T-cell (primary cell): ENCODE measurements at regions of chr4 and their contacts with region 1.

Region 1: GRCh38 chr4:108107729-108108382 is 60.9 kb downstream of the LEF1 start:
- DNase-seq: peak in 15 of 35 experiments; percentile 19 to 72 (median 36)
- ATAC-seq: peak; percentile 81 to 85 (median 84)
- H3K4me3 ChIP-seq: peak overlapping the region; percentile 19 to 49
- H3K4me3 Mint-ChIP-seq: peak overlapping the region; percentile 54 to 67 (median 63)
- H3K27ac ChIP-seq: peak overlapping the region; percentile 83
- H3K27ac Mint-ChIP-seq: peak overlapping the region; percentile 93 to 97
- H3K4me1 ChIP-seq: peaks cover 72 to 88% of the 10 kb centered on the region in 2 experiments
- H3K4me1 Mint-ChIP-seq: peaks cover 93 to 96% (median 96%) of the 10 kb centered on the region in 3 donors
- H3K27me3 ChIP-seq: no peaks in the 10 kb centered on the region
- H3K27me3 Mint-ChIP-seq: no peaks in the 10 kb centered on the region

Region 2: GRCh38 chr4:108126806-108127205 is 18.9 kb after region 1 on chr4:
- CTCF ChIA-PET with region 1: interaction called in 1 of 2 experiments, 12 read pairs
- POLR2A ChIA-PET with region 1: interaction called, 5 read pairs
- DNase-seq: no peak
- ATAC-seq: no peak
- H3K4me3 ChIP-seq: no peak overlapping the region
- H3K4me3 Mint-ChIP-seq: peak overlapping the region in 1 of 3 donors; percentile 83
- H3K27ac ChIP-seq: no peak overlapping the region
- H3K27ac Mint-ChIP-seq: peak overlapping the region; percentile 57 to 88
- H3K4me1 ChIP-seq: peaks cover 24 to 63% of the 10 kb centered on the region in 2 experiments
- H3K4me1 Mint-ChIP-seq: peaks cover 84 to 87% (median 84%) of the 10 kb centered on the region in 3 donors
- H3K27me3 ChIP-seq: no peaks in the 10 kb centered on the region
- H3K27me3 Mint-ChIP-seq: no peaks in the 10 kb centered on the region

Region 3: DNA sequence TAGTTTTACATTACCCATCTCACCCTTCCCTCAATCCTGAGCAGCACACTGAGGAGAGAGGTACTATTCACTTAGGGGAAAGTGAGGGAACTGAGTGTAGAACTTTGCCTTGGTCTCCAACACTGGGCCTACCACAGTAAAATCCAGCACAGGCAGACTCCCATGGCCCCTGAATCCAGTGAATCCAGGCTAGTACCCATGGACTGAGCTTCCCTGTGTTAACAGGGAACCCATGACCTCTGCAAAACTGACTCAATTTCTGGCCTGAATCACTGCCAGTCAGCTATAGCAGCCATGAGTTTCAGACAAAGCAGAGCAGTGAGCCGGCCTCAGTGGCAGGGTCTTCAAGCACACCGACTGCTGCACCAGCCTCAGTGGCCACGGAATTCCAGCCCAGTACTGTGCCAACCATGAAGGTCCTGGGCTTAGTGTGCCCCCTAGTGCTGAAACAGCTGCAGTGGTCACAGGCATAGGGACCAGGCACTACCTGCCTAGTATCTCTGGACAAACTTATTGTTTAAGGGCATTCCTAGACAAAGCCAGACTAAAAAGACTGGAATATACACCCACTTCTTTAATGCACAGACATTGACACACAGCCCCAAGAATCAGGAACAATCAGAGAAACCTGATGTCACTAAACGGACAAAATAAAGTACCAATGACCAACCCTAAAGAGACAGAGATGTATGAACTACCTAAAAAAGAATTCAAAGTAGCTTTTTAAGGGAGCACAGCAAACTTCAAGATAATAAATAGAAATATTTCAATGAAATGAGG is 385.1 kb after region 1 on chr4:
- CTCF ChIA-PET with region 1: no interaction called
- POLR2A ChIA-PET with region 1: no interaction called
- DNase-seq: peak in 7 of 35 experiments; percentile 5 to 46 (median 16)
- ATAC-seq: peak in 2 of 4 experiments; percentile 52 to 55
- H3K4me3 ChIP-seq: no peak overlapping the region
- H3K4me3 Mint-ChIP-seq: no peak overlapping the region
- H3K27ac ChIP-seq: no peak overlapping the region
- H3K27ac Mint-ChIP-seq: no peak overlapping the region
- H3K4me1 ChIP-seq: no peaks in the 10 kb centered on the region
- H3K4me1 Mint-ChIP-seq: peaks cover 0 to 6% (median 0%) of the 10 kb centered on the region in 3 donors
- H3K27me3 ChIP-seq: no peaks in the 10 kb centered on the region
- H3K27me3 Mint-ChIP-seq: no peaks in the 10 kb centered on the region